CD4-positive, alpha-beta memory T cell (primary cell): ENCODE measurements at regions of chr5 and their contacts with region 1.

Region 1: DNA sequence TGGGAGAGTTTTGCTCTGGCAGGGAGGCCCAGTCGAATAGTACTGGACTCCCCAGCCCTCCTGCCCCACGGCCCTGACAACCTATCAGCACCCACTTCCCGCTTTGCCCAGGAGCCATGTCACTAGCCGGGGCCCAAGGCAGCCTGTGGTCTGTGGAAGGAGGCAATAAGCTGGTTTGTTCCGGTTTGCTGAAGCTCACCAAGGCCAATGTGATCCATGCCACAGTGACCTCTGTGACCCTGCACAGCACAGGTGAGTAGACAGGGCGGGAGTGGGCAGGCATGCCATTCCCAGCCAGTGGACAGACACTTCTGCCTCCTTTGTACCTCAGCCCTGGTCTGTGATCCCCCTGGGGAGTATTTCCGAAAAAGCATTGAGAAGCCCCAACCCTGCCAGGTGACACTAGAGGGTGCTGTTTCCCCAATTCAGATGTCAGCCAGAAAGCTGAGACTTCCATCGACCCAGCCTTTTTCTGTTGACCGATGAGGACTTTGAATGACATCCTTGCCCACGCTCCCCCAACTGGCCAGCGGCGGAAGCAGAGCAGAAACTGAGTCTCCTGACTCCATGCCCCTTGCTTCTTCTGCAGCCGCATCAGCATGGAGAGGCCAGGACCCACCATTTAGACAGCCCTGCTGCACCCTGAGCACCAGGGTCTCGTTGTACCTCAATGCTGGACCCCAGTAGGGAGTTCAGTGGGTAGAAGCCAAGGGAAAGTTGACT is 9.6 kb downstream of the PCYOX1L start:
- DNase-seq: peak in 4 of 5 donors; percentile 43 to 52 (median 48)
- H3K4me3 ChIP-seq: no peak overlapping the region
- H3K4me3 Mint-ChIP-seq: no peak overlapping the region
- H3K27ac ChIP-seq: no peak overlapping the region
- H3K27ac Mint-ChIP-seq: peak overlapping the region in 3 of 7 donors; percentile 28 to 62 (median 48)
- H3K4me1 ChIP-seq: peaks cover 12% of the 10 kb centered on the region
- H3K4me1 Mint-ChIP-seq: peaks cover 13 to 27% (median 25%) of the 10 kb centered on the region in 4 donors
- H3K27me3 ChIP-seq: no peaks in the 10 kb centered on the region
- H3K27me3 Mint-ChIP-seq: no peaks in the 10 kb centered on the region

Region 2: GRCh38 chr5:149284501-149284900 is 82.9 kb before region 1 on chr5:
- CTCF ChIA-PET with region 1: no interaction called
- POLR2A ChIA-PET with region 1: no interaction called
- intact Hi-C with region 1: no loop called
- DNase-seq: no peak
- H3K4me3 ChIP-seq: no peak overlapping the region
- H3K4me3 Mint-ChIP-seq: no peak overlapping the region
- H3K27ac ChIP-seq: no peak overlapping the region
- H3K27ac Mint-ChIP-seq: no peak overlapping the region
- H3K4me1 ChIP-seq: no peaks in the 10 kb centered on the region
- H3K4me1 Mint-ChIP-seq: no peaks in the 10 kb centered on the region
- H3K27me3 ChIP-seq: peaks cover 4% of the 10 kb centered on the region
- H3K27me3 Mint-ChIP-seq: peaks cover 5 to 19% of the 10 kb centered on the region in 2 donors

Region 3: DNA sequence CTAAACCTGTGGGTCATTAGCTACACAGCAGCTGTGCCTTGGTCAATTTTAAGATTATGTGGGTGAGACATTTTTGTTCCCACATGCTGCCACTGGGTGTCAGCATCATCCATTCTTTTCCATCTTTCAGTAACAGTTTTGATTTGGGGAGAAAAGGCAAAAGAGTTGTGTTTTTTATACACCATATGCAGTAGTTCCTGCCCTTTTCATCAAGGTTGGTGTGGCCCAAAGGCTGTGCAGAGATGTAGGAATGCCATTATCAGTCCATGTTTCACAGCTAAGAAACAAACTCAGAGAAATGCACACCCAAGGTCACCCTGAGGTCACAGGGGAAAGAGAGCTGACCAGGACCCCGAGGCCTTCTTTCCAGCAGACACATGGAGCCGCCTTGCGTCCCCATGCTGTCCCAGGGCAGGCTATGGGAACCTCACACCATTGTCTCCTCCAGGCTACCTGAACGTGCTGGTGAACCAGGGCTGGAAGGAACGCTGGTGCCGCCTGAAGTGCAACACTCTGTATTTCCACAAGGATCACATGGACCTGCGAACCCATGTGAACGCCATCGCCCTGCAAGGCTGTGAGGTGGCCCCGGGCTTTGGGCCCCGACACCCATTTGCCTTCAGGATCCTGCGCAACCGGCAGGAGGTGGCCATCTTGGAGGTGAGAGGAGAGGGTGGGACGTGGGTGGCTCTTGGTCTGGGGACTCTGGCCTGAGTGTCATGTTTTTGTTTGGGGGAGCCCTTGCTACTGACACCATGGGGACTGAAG is 49.9 kb before region 1 on chr5:
- CTCF ChIA-PET with region 1: interaction called, 564 read pairs
- POLR2A ChIA-PET with region 1: interaction called, 7 read pairs
- intact Hi-C with region 1: loop called (anchors 1 kb)
- DNase-seq: peak in 4 of 5 donors; percentile 52 to 66 (median 56)
- H3K4me3 ChIP-seq: no peak overlapping the region
- H3K4me3 Mint-ChIP-seq: no peak overlapping the region
- H3K27ac ChIP-seq: no peak overlapping the region
- H3K27ac Mint-ChIP-seq: no peak overlapping the region
- H3K4me1 ChIP-seq: no peaks in the 10 kb centered on the region
- H3K4me1 Mint-ChIP-seq: peaks cover 0 to 3% (median 1%) of the 10 kb centered on the region in 4 donors
- H3K27me3 ChIP-seq: no peaks in the 10 kb centered on the region
- H3K27me3 Mint-ChIP-seq: no peaks in the 10 kb centered on the region

Region 4: DNA sequence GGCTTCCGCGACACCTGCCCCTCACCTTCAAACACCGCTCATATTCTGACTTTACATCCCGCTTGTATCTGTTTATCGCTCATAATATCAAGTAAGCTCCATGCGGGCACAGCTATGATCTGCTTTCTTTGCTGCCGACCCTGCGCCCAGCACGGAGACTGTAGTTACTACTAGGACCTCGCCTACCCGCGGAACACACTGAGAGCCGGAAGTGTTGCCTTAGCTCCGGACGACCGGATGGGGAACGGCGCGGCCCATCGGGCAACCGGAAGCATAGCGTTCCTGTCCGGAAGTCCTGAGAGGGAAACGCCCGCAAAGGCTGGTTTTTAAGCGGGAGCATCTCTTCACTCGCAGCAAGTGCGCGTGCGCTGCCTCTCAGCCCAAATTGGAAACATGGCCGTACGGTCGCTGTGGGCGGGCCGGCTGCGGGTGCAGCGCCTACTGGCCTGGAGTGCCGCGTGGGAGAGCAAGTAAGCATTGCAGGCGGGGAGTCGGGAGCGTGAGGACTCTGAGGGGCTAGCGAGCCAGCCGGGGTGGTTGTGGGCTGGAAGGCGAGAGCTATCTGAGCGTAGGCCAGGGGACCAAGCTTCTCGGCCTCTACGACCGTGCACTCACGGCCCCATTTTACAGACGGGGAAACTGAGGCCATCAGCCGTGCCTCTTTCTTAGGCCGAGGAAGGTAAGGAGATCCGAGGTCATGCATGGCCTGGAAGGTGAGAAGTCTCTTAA is 22.1 kb before region 1 on chr5 and contains the start of gene GRPEL2:
- CTCF ChIA-PET with region 1: interaction called, 337 read pairs
- POLR2A ChIA-PET with region 1: interaction called, 45 read pairs
- intact Hi-C with region 1: no loop called
- DNase-seq: peak; percentile 80 to 87 (median 82)
- H3K4me3 ChIP-seq: peak within 1 kb of the TSS; percentile 83 to 92
- H3K4me3 Mint-ChIP-seq: peak within 1 kb of the TSS; percentile 91 to 99 (median 96)
- H3K27ac ChIP-seq: peak within 1 kb of the TSS; percentile 78
- H3K27ac Mint-ChIP-seq: peak within 1 kb of the TSS; percentile 87 to 99 (median 93)
- H3K4me1 ChIP-seq: peaks cover 53% of the 10 kb centered on the region
- H3K4me1 Mint-ChIP-seq: peaks cover 36 to 67% (median 55%) of the 10 kb centered on the region in 4 donors
- H3K27me3 ChIP-seq: no peaks in the 10 kb centered on the region
- H3K27me3 Mint-ChIP-seq: no peaks in the 10 kb centered on the region
- total RNA-seq, gene GRPEL2: 39.4 to 41.9 TPM

Region 5: GRCh38 chr5:149387081-149387631 is 19.7 kb after region 1 on chr5:
- CTCF ChIA-PET with region 1: interaction called, 26 read pairs
- POLR2A ChIA-PET with region 1: no interaction called
- intact Hi-C with region 1: no loop called
- DNase-seq: no peak
- H3K4me3 ChIP-seq: no peak overlapping the region
- H3K4me3 Mint-ChIP-seq: no peak overlapping the region
- H3K27ac ChIP-seq: no peak overlapping the region
- H3K27ac Mint-ChIP-seq: no peak overlapping the region
- H3K4me1 ChIP-seq: no peaks in the 10 kb centered on the region
- H3K4me1 Mint-ChIP-seq: no peaks in the 10 kb centered on the region
- H3K27me3 ChIP-seq: no peaks in the 10 kb centered on the region
- H3K27me3 Mint-ChIP-seq: peaks cover 0 to 1% of the 10 kb centered on the region in 2 donors

Region 6: GRCh38 chr5:149544028-149544420 is 176.6 kb after region 1 on chr5:
- CTCF ChIA-PET with region 1: interaction called, 10 read pairs
- POLR2A ChIA-PET with region 1: no interaction called
- intact Hi-C with region 1: no loop called
- DNase-seq: no peak
- H3K4me3 ChIP-seq: no peak overlapping the region
- H3K4me3 Mint-ChIP-seq: peak overlapping the region in 1 of 8 donors; percentile 31
- H3K27ac ChIP-seq: no peak overlapping the region
- H3K27ac Mint-ChIP-seq: peak overlapping the region in 3 of 7 donors; percentile 41 to 57 (median 42)
- H3K4me1 ChIP-seq: peaks cover 90% of the 10 kb centered on the region
- H3K4me1 Mint-ChIP-seq: peaks cover 43 to 88% (median 67%) of the 10 kb centered on the region in 4 donors
- H3K27me3 ChIP-seq: no peaks in the 10 kb centered on the region
- H3K27me3 Mint-ChIP-seq: no peaks in the 10 kb centered on the region